H1 (cell line): ENCODE measurements at regions of chr9 and their contacts with region 1.

Region 1: DNA sequence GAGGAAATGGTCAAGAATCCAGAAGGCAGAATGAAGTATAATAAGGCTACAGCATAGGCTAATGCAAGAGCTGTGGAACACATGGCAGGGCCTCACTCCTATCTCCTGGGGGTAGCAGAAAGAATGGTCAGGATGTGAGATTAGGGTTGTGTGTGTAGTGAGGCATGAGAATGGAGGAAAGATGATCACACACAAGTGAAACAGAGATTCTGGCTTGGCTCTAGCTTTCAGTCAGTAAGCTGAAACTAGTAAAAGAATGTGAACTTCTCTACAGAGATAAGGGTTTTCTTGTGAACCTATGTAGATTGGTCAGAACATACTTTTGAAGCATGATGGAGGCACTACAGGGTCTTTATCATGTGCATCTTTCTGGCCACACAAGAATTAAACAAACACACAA is 298.8 kb downstream of the ASTN2 start:
- DNase-seq: no peak
- H3K4me3 ChIP-seq: no peak overlapping the region
- H3K27ac ChIP-seq: no peak overlapping the region
- H3K4me1 ChIP-seq: no peaks in the 10 kb centered on the region
- H3K27me3 ChIP-seq: no peaks in the 10 kb centered on the region
- CTCF ChIP-seq: no peak
- EP300 ChIP-seq: no peak
- POLR2A ChIP-seq: no peak
- RAD21 ChIP-seq: no peak

Region 2: DNA sequence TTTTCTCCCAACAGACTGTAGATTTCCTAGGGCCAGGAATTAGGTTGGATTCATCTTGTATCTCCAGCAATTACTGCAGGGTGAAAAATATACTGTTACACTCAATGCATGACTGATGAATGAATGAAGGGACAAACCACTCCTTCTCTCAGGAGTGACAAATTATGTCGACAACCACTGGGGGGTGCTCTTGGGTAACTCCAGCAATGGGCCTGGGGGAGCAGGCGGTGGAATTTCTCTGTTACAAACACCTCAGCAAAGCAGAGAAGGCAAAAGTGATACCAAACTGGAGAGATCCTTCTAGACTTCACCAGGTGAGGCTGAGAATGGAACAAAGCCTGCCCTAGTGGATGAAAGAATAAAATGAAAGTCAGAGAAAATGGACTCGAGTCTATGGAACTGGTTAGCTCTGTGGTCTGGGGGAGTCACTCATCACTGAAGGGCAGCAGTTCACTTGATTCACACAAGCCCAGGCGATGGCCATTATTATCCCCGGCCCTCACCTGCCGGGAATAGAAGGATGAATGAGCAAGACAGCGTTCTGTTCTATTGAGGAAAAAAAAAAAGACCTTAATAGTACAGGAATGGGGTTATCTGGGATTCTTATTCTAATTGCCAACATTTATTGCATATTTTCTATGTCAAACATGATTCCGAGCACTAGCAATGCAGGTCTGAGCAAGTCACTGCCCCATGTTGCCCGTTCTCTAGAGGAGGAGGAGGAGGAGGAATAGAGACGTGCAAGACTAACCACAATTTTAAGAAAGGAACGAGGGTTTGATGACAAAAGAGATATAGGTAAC is 42.3 kb before region 1 on chr9:
- CTCF ChIA-PET with region 1: interaction called, 12 read pairs
- POLR2A ChIA-PET with region 1: no interaction called
- DNase-seq: peak; percentile 25 to 83
- H3K4me3 ChIP-seq: no peak overlapping the region
- H3K27ac ChIP-seq: no peak overlapping the region
- H3K4me1 ChIP-seq: peaks cover 0 to 10% (median 4%) of the 10 kb centered on the region in 4 experiments; a peak in 4 of 7 replicates
- H3K27me3 ChIP-seq: no peaks in the 10 kb centered on the region
- CTCF ChIP-seq: peak; percentile 57 to 88 (median 81)
- EP300 ChIP-seq: no peak
- POLR2A ChIP-seq: no peak
- RAD21 ChIP-seq: peak; percentile 91 to 96

Region 3: DNA sequence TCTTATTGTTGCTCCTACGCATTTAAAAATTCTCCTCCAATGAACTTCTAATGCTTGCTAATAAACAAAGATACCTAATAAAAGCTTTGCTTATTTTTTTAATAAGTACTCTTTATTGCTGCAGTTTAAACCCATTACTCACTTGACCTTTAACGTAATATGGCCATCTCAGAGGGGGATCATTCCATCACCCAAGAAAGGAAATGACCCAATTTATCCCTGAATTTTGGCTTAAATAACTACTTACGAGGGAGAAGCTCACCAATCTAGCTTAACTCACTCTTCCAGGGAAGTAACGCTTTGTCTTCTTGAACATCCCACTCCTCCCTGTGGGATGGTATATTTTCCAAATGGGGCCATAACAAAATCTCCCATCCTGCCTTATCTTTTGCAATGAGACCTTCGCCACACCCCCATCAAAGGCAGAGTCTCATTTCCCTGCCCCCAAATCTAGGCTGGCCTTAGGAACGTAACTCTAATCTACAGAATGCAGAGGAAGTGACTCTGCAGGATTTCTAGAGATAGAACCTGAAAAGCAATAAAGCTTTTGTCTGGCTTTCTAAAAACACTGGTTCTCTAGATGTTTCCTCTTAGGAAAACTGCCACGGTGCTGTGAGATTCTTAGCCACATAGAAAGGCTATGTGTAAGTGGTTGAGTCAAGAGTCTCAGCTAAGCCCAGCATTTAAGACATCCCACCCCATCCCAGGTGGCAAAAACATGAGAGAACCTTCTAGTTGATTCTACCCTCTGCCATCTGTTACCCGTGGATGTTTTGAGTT is 11.2 kb before region 1 on chr9:
- CTCF ChIA-PET with region 1: interaction called, 10 read pairs
- POLR2A ChIA-PET with region 1: interaction called, 3 read pairs
- DNase-seq: no peak
- H3K4me3 ChIP-seq: no peak overlapping the region
- H3K27ac ChIP-seq: no peak overlapping the region
- H3K4me1 ChIP-seq: peaks cover 0 to 3% (median 0%) of the 10 kb centered on the region in 4 experiments; a peak in 1 of 7 replicates
- H3K27me3 ChIP-seq: no peaks in the 10 kb centered on the region
- CTCF ChIP-seq: no peak
- EP300 ChIP-seq: no peak
- POLR2A ChIP-seq: no peak
- RAD21 ChIP-seq: no peak